ENCODE measurements at regions of chr7 and their contacts with region 1.

Region 1: GRCh38 chr7:13577566-13578145 is 411.8 kb downstream of the ETV1 start:
- DNase-seq: no peak
- ATAC-seq: no peak
- H3K4me3 ChIP-seq: no peak overlapping the region
- H3K4me3 Mint-ChIP-seq: no peak overlapping the region
- H3K27ac ChIP-seq: no peak overlapping the region
- H3K27ac Mint-ChIP-seq: no peak overlapping the region
- H3K4me1 ChIP-seq: no peaks in the 10 kb centered on the region
- H3K4me1 Mint-ChIP-seq: no peaks in the 10 kb centered on the region
- H3K27me3 ChIP-seq: no peaks in the 10 kb centered on the region
- H3K27me3 Mint-ChIP-seq: peaks cover 0 to 4% of the 10 kb centered on the region in 2 donors

Region 2: DNA sequence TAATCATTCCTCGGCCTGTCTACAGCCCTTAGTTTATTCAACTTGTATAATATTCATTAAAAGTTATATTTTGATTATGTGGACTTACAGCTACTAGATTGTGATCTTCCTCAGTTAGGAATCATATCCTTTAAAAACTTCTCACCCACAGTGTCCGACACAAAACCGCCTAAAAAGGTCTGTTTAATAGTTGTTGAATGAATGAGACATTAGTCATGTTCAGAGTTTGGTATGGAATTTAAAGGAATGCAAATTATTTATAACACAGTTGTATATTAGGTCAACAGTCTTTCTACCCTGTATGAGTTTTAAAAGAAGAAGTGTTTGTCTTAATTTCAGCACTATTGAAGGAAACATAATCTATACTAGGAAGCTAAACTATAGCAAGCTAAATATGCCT is 500.2 kb before region 1 on chr7:
- CTCF ChIA-PET with region 1: no interaction called
- POLR2A ChIA-PET with region 1: no interaction called
- DNase-seq: no peak
- ATAC-seq: no peak
- H3K4me3 ChIP-seq: no peak overlapping the region
- H3K4me3 Mint-ChIP-seq: no peak overlapping the region
- H3K27ac ChIP-seq: no peak overlapping the region
- H3K27ac Mint-ChIP-seq: no peak overlapping the region
- H3K4me1 ChIP-seq: no peaks in the 10 kb centered on the region
- H3K4me1 Mint-ChIP-seq: no peaks in the 10 kb centered on the region
- H3K27me3 ChIP-seq: no peaks in the 10 kb centered on the region
- H3K27me3 Mint-ChIP-seq: peaks cover 3 to 11% of the 10 kb centered on the region in 2 donors

Region 3: GRCh38 chr7:15214976-15215375 is 1637.3 kb after region 1 on chr7:
- CTCF ChIA-PET with region 1: interaction called in 1 of 2 experiments, 13 read pairs
- POLR2A ChIA-PET with region 1: no interaction called
- DNase-seq: no peak
- ATAC-seq: no peak
- H3K4me3 ChIP-seq: no peak overlapping the region
- H3K4me3 Mint-ChIP-seq: no peak overlapping the region
- H3K27ac ChIP-seq: no peak overlapping the region
- H3K27ac Mint-ChIP-seq: no peak overlapping the region
- H3K4me1 ChIP-seq: no peaks in the 10 kb centered on the region
- H3K4me1 Mint-ChIP-seq: no peaks in the 10 kb centered on the region
- H3K27me3 ChIP-seq: no peaks in the 10 kb centered on the region
- H3K27me3 Mint-ChIP-seq: no peaks in the 10 kb centered on the region